K562 (cell line): ENCODE measurements at regions of chr10 and their contacts with region 1.

Region 1: GRCh38 chr10:75401569-75402485 is at the start of gene ZNF503:
- DNase-seq: peak; percentile 53 to 73 (median 67)
- ATAC-seq: peak; percentile 87
- H3K4me3 ChIP-seq: peak within 1 kb of the TSS; percentile 20
- H3K27ac ChIP-seq: no peak within 1 kb of the TSS
- H3K4me1 ChIP-seq: peaks cover 0 to 64% of the 10 kb centered on the region in 2 experiments; a peak in 2 of 5 replicates
- H3K27me3 ChIP-seq: peaks cover 53 to 80% of the 10 kb centered on the region in 2 experiments
- CTCF ChIP-seq: no peak
- EP300 ChIP-seq: no peak
- POLR2A ChIP-seq: no peak
- RAD21 ChIP-seq: no peak
- polyA plus RNA-seq, gene ZNF503: not detected

Region 2: DNA sequence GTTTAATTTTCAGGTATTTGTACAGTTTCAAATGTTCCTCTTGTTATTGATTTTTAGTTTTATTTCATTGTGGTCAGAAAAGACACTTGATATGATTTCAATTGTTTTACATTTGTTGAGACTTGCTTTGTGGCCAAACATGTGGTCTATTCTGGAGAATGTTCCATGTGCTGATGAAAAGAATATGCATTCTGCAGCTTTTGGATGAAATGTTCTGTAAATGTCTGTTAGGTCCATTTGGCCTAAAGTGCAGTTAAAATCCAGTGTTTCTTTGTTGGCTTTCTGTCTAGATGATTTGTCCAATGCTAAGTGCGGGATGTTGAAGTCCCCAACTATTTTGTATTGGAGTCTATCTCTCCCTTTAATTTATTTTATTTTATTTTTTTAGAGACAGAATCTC is 70.7 kb before region 1 on chr10:
- CTCF ChIA-PET with region 1: no interaction called
- POLR2A ChIA-PET with region 1: no interaction called
- in situ Hi-C with region 1: no loop called
- intact Hi-C with region 1: no loop called
- DNase-seq: no peak
- ATAC-seq: no peak
- H3K4me3 ChIP-seq: no peak overlapping the region
- H3K27ac ChIP-seq: no peak overlapping the region
- H3K4me1 ChIP-seq: no peaks in the 10 kb centered on the region
- H3K27me3 ChIP-seq: peaks cover 0 to 2% of the 10 kb centered on the region in 2 experiments; a peak in 1 of 5 replicates
- CTCF ChIP-seq: no peak
- EP300 ChIP-seq: no peak
- POLR2A ChIP-seq: no peak
- RAD21 ChIP-seq: no peak

Region 3: GRCh38 chr10:75922435-75922834 is 520.6 kb after region 1 on chr10:
- CTCF ChIA-PET with region 1: interaction called, 3 read pairs
- POLR2A ChIA-PET with region 1: no interaction called
- in situ Hi-C with region 1: no loop called
- intact Hi-C with region 1: loop called (anchors 10 kb)
- DNase-seq: no peak
- ATAC-seq: no peak
- H3K4me3 ChIP-seq: no peak overlapping the region
- H3K27ac ChIP-seq: no peak overlapping the region
- H3K4me1 ChIP-seq: no peaks in the 10 kb centered on the region
- H3K27me3 ChIP-seq: peaks cover 4 to 5% of the 10 kb centered on the region in 2 experiments; a peak in 2 of 5 replicates
- CTCF ChIP-seq: peak in 2 of 3 experiments; percentile 13 to 28; a peak in 2 of 6 replicates
- EP300 ChIP-seq: no peak
- POLR2A ChIP-seq: no peak
- RAD21 ChIP-seq: peak in 1 of 2 experiments; percentile 27; a peak in 3 of 4 replicates

Region 4: GRCh38 chr10:76036111-76036940 is 634.5 kb after region 1 on chr10:
- CTCF ChIA-PET with region 1: no interaction called
- POLR2A ChIA-PET with region 1: no interaction called
- in situ Hi-C with region 1: no loop called
- intact Hi-C with region 1: loop called (anchors 10 kb)
- DNase-seq: peak; percentile 68 to 76 (median 76)
- ATAC-seq: peak; percentile 96
- H3K4me3 ChIP-seq: no peak overlapping the region
- H3K27ac ChIP-seq: no peak overlapping the region
- H3K4me1 ChIP-seq: no peaks in the 10 kb centered on the region
- H3K27me3 ChIP-seq: peaks cover 4 to 8% of the 10 kb centered on the region in 2 experiments; a peak in 3 of 5 replicates
- CTCF ChIP-seq: peak; percentile 80 to 95 (median 90)
- EP300 ChIP-seq: no peak
- POLR2A ChIP-seq: no peak
- RAD21 ChIP-seq: peak; percentile 74 to 76

Region 5: GRCh38 chr10:76303682-76304316 is 902.0 kb after region 1 on chr10:
- CTCF ChIA-PET with region 1: no interaction called
- POLR2A ChIA-PET with region 1: no interaction called
- in situ Hi-C with region 1: no loop called
- intact Hi-C with region 1: loop called (anchors 5 kb)
- DNase-seq: peak in 2 of 4 experiments; percentile 29 to 44
- ATAC-seq: peak; percentile 83
- H3K4me3 ChIP-seq: no peak overlapping the region
- H3K27ac ChIP-seq: no peak overlapping the region
- H3K4me1 ChIP-seq: no peaks in the 10 kb centered on the region
- H3K27me3 ChIP-seq: no peaks in the 10 kb centered on the region
- CTCF ChIP-seq: peak in 2 of 3 experiments; percentile 34 to 40; a peak in 3 of 6 replicates
- EP300 ChIP-seq: no peak
- POLR2A ChIP-seq: no peak
- RAD21 ChIP-seq: peak; percentile 21 to 49; a peak in 3 of 4 replicates

Region 6: DNA sequence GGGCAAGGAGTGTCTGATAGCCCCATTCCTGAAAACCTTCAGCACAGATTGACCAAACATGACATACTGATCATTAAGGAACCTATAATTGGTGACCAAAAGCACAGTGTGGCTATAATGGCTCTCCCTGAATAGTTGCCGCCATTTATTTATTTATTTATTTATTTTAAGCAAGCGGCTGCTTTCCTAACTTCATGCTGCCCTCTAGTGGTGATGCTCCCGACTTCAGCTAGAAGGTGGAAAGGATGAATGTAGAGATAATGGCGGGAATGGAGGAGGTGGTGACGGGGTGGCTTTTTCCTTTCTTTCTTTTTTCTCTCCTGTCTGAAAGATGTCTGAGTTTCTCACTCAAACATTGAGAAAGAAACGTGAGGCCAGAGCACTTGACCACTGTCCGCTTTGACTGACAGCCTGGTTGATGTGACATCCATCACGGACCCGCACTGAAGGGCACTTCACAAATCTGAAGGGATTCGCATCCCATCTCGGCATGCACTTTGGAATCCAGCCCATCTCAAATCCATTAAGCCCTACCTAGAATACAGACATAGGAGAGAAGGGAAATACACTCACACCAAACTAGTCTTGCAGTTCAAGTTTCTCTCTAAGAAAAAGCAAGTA is 1145.6 kb after region 1 on chr10:
- CTCF ChIA-PET with region 1: no interaction called
- POLR2A ChIA-PET with region 1: no interaction called
- in situ Hi-C with region 1: no loop called
- intact Hi-C with region 1: loop called (anchors 10 kb)
- DNase-seq: peak; percentile 58 to 85 (median 66)
- ATAC-seq: peak; percentile 93
- H3K4me3 ChIP-seq: no peak overlapping the region
- H3K27ac ChIP-seq: no peak overlapping the region
- H3K4me1 ChIP-seq: no peaks in the 10 kb centered on the region
- H3K27me3 ChIP-seq: no peaks in the 10 kb centered on the region
- CTCF ChIP-seq: peak; percentile 71 to 85 (median 79)
- EP300 ChIP-seq: no peak
- POLR2A ChIP-seq: no peak
- RAD21 ChIP-seq: peak; percentile 69 to 74

Region 7: GRCh38 chr10:76984559-76985443 is 1583.0 kb after region 1 on chr10:
- CTCF ChIA-PET with region 1: no interaction called
- POLR2A ChIA-PET with region 1: no interaction called
- in situ Hi-C with region 1: no loop called
- intact Hi-C with region 1: loop called (anchors 10 kb)
- DNase-seq: peak; percentile 71 to 82 (median 73)
- ATAC-seq: peak; percentile 97
- H3K4me3 ChIP-seq: no peak overlapping the region
- H3K27ac ChIP-seq: no peak overlapping the region
- H3K4me1 ChIP-seq: no peaks in the 10 kb centered on the region
- H3K27me3 ChIP-seq: peaks cover 0 to 5% of the 10 kb centered on the region in 2 experiments; a peak in 1 of 5 replicates
- CTCF ChIP-seq: peak; percentile 83 to 95 (median 89)
- EP300 ChIP-seq: no peak
- POLR2A ChIP-seq: no peak
- RAD21 ChIP-seq: peak; percentile 68 to 80

Region 8: GRCh38 chr10:77062381-77062780 is 1660.6 kb after region 1 on chr10:
- CTCF ChIA-PET with region 1: no interaction called
- POLR2A ChIA-PET with region 1: no interaction called
- in situ Hi-C with region 1: no loop called
- intact Hi-C with region 1: no loop called
- DNase-seq: no peak
- ATAC-seq: no peak
- H3K4me3 ChIP-seq: no peak overlapping the region
- H3K27ac ChIP-seq: no peak overlapping the region
- H3K4me1 ChIP-seq: no peaks in the 10 kb centered on the region
- H3K27me3 ChIP-seq: no peaks in the 10 kb centered on the region; a peak in 2 of 5 replicates
- CTCF ChIP-seq: no peak
- EP300 ChIP-seq: no peak
- POLR2A ChIP-seq: no peak
- RAD21 ChIP-seq: no peak